GM12878 (cell line): ENCODE measurements at regions of chr5 and their contacts with region 1.

Region 1: GRCh38 chr5:129094087-129094923 is at the start of gene ISOC1:
- DNase-seq: peak; percentile 42
- ATAC-seq: peak; percentile 92
- H3K4me3 ChIP-seq: peak within 1 kb of the TSS; percentile 83
- H3K27ac ChIP-seq: peak within 1 kb of the TSS; percentile 71
- H3K4me1 ChIP-seq: no peaks in the 10 kb centered on the region
- H3K27me3 ChIP-seq: 0 out of 4 replicates have a peak, but pooled peaks cover 0 to under 1% of the 10 kb centered on the region in 2 experiments
- CTCF ChIP-seq: peak in 1 of 3 experiments; percentile 10; a peak in 1 of 6 replicates
- EP300 ChIP-seq: no peak
- POLR2A ChIP-seq: peak; percentile 80
- RAD21 ChIP-seq: no peak
- polyA plus RNA-seq, gene ISOC1: 12.6 to 16.5 TPM

Region 2: GRCh38 chr5:129104910-129105455 is 10.7 kb after region 1 on chr5:
- CTCF ChIA-PET with region 1: interaction called, 18 read pairs
- POLR2A ChIA-PET with region 1: interaction called, 6 read pairs
- RAD21 ChIA-PET with region 1: no interaction called
- SMC1A ChIA-PET with region 1: interaction called, 9 read pairs
- in situ Hi-C with region 1: no loop called
- intact Hi-C with region 1: no loop called
- DNase-seq: no peak
- ATAC-seq: no peak
- H3K4me3 ChIP-seq: no peak overlapping the region
- H3K27ac ChIP-seq: no peak overlapping the region
- H3K4me1 ChIP-seq: no peaks in the 10 kb centered on the region
- H3K27me3 ChIP-seq: no peaks in the 10 kb centered on the region
- CTCF ChIP-seq: no peak
- EP300 ChIP-seq: no peak
- POLR2A ChIP-seq: no peak
- RAD21 ChIP-seq: no peak

Region 3: GRCh38 chr5:129120158-129120581 is 25.9 kb after region 1 on chr5:
- CTCF ChIA-PET with region 1: interaction called, 105 read pairs
- POLR2A ChIA-PET with region 1: interaction called, 15 read pairs
- RAD21 ChIA-PET with region 1: interaction called, 37 read pairs
- SMC1A ChIA-PET with region 1: interaction called, 52 read pairs
- in situ Hi-C with region 1: no loop called
- intact Hi-C with region 1: no loop called
- DNase-seq: peak; percentile 24
- ATAC-seq: peak; percentile 90
- H3K4me3 ChIP-seq: no peak overlapping the region
- H3K27ac ChIP-seq: no peak overlapping the region
- H3K4me1 ChIP-seq: peaks cover 5% of the 10 kb centered on the region; the same call in 1 of the 2 replicates
- H3K27me3 ChIP-seq: no peaks in the 10 kb centered on the region
- CTCF ChIP-seq: no peak
- EP300 ChIP-seq: no peak
- POLR2A ChIP-seq: no peak
- RAD21 ChIP-seq: no peak

Region 4: DNA sequence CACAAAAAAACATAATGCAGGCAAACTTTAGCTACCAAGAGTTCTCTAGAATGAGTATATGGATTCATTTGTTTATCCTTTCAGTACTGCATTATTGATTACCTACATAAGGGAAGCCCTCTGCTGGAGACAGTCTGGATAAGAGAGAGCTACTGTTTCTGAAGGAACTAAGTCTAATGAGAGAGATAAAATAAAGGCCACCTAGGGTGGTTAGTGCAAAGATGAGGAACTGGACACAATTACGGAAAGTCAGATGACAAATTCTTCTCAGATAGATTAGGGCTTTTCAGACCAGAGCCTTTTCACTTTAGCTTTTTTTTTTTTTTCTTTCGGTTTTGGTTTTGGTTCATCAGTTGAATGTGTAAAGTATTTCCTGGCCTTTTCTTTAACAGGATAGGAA is 31.5 kb after region 1 on chr5:
- CTCF ChIA-PET with region 1: interaction called, 105 read pairs
- POLR2A ChIA-PET with region 1: interaction called, 16 read pairs
- RAD21 ChIA-PET with region 1: interaction called, 37 read pairs
- SMC1A ChIA-PET with region 1: interaction called, 52 read pairs
- in situ Hi-C with region 1: no loop called
- intact Hi-C with region 1: loop called (anchors 1 kb)
- DNase-seq: peak; percentile 43
- ATAC-seq: peak; percentile 89
- H3K4me3 ChIP-seq: no peak overlapping the region
- H3K27ac ChIP-seq: peak overlapping the region; percentile 73
- H3K4me1 ChIP-seq: peaks cover 8% of the 10 kb centered on the region
- H3K27me3 ChIP-seq: no peaks in the 10 kb centered on the region
- CTCF ChIP-seq: 0 out of 6 replicates have a peak, but pooled peaks of 1 of the 3 experiments have one; percentile 11
- EP300 ChIP-seq: no peak
- POLR2A ChIP-seq: no peak
- RAD21 ChIP-seq: no peak

Region 5: GRCh38 chr5:129155876-129156275 is 61.6 kb after region 1 on chr5:
- CTCF ChIA-PET with region 1: no interaction called
- POLR2A ChIA-PET with region 1: no interaction called
- RAD21 ChIA-PET with region 1: no interaction called
- SMC1A ChIA-PET with region 1: no interaction called
- in situ Hi-C with region 1: no loop called
- intact Hi-C with region 1: no loop called
- DNase-seq: no peak
- ATAC-seq: no peak
- H3K4me3 ChIP-seq: no peak overlapping the region
- H3K27ac ChIP-seq: no peak overlapping the region
- H3K4me1 ChIP-seq: no peaks in the 10 kb centered on the region
- H3K27me3 ChIP-seq: no peaks in the 10 kb centered on the region
- CTCF ChIP-seq: no peak
- EP300 ChIP-seq: no peak
- POLR2A ChIP-seq: no peak
- RAD21 ChIP-seq: no peak

Region 6: GRCh38 chr5:129191633-129192032 is 97.3 kb after region 1 on chr5:
- CTCF ChIA-PET with region 1: no interaction called
- POLR2A ChIA-PET with region 1: no interaction called
- RAD21 ChIA-PET with region 1: no interaction called
- SMC1A ChIA-PET with region 1: no interaction called
- in situ Hi-C with region 1: no loop called
- intact Hi-C with region 1: no loop called
- DNase-seq: no peak
- ATAC-seq: no peak
- H3K4me3 ChIP-seq: no peak overlapping the region
- H3K27ac ChIP-seq: no peak overlapping the region
- H3K4me1 ChIP-seq: no peaks in the 10 kb centered on the region
- H3K27me3 ChIP-seq: no peaks in the 10 kb centered on the region; a peak in 1 of 4 replicates
- CTCF ChIP-seq: no peak
- EP300 ChIP-seq: no peak
- POLR2A ChIP-seq: no peak
- RAD21 ChIP-seq: no peak

Region 7: GRCh38 chr5:129377504-129377903 is 283.2 kb after region 1 on chr5:
- CTCF ChIA-PET with region 1: no interaction called
- POLR2A ChIA-PET with region 1: no interaction called
- RAD21 ChIA-PET with region 1: no interaction called
- SMC1A ChIA-PET with region 1: no interaction called
- in situ Hi-C with region 1: no loop called
- intact Hi-C with region 1: no loop called
- DNase-seq: no peak
- ATAC-seq: no peak; the same call in 2 of the 3 replicates
- H3K4me3 ChIP-seq: no peak overlapping the region
- H3K27ac ChIP-seq: no peak overlapping the region
- H3K4me1 ChIP-seq: no peaks in the 10 kb centered on the region
- H3K27me3 ChIP-seq: no peaks in the 10 kb centered on the region
- CTCF ChIP-seq: no peak
- EP300 ChIP-seq: no peak
- POLR2A ChIP-seq: no peak
- RAD21 ChIP-seq: no peak